Activated T-helper 2 cell treated with anti-CD3 and anti-CD28 coated beads, Interferon-gamma antibody, Interleukin-2, Interleukin-4, amounts not matched to agents 10 μg/mL and 5 μg/mL and 100 μg/mL, durations not matched to agents 14 hours and 24 hours and 36 hours (primary cell): ENCODE measurements at regions of chr3 and their contacts with region 1.

Region 1: DNA sequence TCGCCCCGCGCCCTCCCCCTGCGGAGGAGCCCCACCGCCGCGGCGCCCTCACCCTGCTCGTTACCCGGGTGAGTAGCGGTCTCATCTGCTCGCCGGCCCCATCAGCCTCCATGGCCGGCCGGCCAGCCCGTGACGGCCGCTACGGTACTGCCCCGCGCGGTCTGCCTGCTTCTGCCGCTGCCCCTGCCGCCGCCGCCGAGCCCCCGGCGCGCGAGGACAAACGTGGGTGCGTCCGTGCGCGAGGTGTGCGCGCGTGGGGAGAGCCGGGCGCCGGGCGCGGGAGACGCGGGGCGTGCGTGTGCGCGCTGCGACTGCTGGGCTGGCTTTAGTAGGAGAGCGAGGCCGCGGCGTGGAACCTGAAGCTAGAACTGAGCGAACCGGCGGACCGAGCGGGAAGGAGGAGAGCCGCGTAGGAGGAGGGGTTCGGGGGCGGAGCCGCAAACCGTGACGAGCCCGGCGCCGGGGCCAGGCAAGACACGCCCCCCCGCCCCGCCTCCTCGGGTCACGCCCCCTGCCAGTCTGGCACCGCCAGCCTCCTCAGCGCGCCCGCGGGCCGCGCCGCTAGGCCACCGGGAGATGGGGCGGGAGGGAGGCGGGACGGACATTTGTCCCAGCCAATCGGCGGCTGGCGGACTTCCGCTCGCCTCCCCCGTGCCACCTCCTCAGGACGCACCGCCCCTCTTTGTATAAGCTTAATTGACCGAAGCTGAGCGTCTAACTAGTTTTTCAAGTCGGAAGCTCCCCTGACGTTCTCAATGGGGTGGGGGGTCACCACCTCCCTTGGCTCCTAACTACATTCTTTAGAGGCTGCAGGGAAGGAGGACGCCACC is at the start of gene SLC4A7:
- DNase-seq: peak; percentile 97
- H3K4me3 Mint-ChIP-seq: peak within 1 kb of the TSS; percentile 93
- H3K27ac Mint-ChIP-seq: peak within 1 kb of the TSS; percentile 88
- H3K4me1 Mint-ChIP-seq: peaks cover 31% of the 10 kb centered on the region
- H3K27me3 Mint-ChIP-seq: no peaks in the 10 kb centered on the region
- total RNA-seq, gene SLC4A7: 76.4 and 77.8 TPM in 2 replicates

Region 2: GRCh38 chr3:27312044-27312668 is 172.1 kb before region 1 on chr3:
- intact Hi-C with region 1: loop called (anchors 5 kb)
- DNase-seq: no peak
- H3K4me3 Mint-ChIP-seq: no peak overlapping the region
- H3K27ac Mint-ChIP-seq: no peak overlapping the region
- H3K4me1 Mint-ChIP-seq: no peaks in the 10 kb centered on the region
- H3K27me3 Mint-ChIP-seq: peaks cover 15% of the 10 kb centered on the region

Region 3: DNA sequence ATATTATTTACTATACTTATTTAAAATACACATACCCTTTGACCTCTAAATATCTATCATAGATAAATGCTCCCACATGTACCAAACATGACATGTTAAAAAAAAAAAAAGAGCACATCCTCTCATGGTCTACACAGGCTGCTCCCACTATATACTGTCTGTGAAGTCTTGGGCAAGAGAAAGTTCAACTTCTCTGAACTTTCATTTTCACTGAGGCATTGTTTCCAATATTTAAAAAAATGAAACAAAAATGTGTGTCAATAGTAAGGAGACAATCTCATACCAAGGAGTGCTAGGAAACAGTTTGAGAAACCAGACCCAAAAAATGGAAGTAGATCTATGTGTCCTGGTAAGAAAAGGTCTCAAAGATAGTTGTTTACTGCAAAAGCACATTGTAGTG is 29.3 kb before region 1 on chr3:
- intact Hi-C with region 1: loop called (anchors 1 kb)
- DNase-seq: no peak
- H3K4me3 Mint-ChIP-seq: peak overlapping the region; percentile 3
- H3K27ac Mint-ChIP-seq: peak overlapping the region; percentile 85
- H3K4me1 Mint-ChIP-seq: peaks cover 42% of the 10 kb centered on the region
- H3K27me3 Mint-ChIP-seq: no peaks in the 10 kb centered on the region

Region 4: GRCh38 chr3:27590437-27591298 is 106.4 kb after region 1 on chr3:
- intact Hi-C with region 1: loop called (anchors 1 kb)
- DNase-seq: no peak
- H3K4me3 Mint-ChIP-seq: peak overlapping the region; percentile 38
- H3K27ac Mint-ChIP-seq: peak overlapping the region; percentile 81
- H3K4me1 Mint-ChIP-seq: peaks cover 32% of the 10 kb centered on the region
- H3K27me3 Mint-ChIP-seq: no peaks in the 10 kb centered on the region

Region 5: GRCh38 chr3:27681245-27681748 is 197.1 kb after region 1 on chr3:
- intact Hi-C with region 1: loop called (anchors 5 kb)
- DNase-seq: no peak
- H3K4me3 Mint-ChIP-seq: peak overlapping the region; percentile 62
- H3K27ac Mint-ChIP-seq: peak overlapping the region; percentile 64
- H3K4me1 Mint-ChIP-seq: peaks cover 10% of the 10 kb centered on the region
- H3K27me3 Mint-ChIP-seq: peaks cover 5% of the 10 kb centered on the region